ENCODE measurements at regions of chr22 and their contacts with region 1.

Region 1: GRCh38 chr22:25057013-25057881 is 104.7 kb downstream of the KIAA1671 start:
- DNase-seq: peak; percentile 28 to 37
- H3K4me3 ChIP-seq: no peak overlapping the region
- H3K27ac ChIP-seq: no peak overlapping the region
- H3K4me1 ChIP-seq: no peaks in the 10 kb centered on the region
- H3K27me3 ChIP-seq: no peaks in the 10 kb centered on the region
- CTCF ChIP-seq: peak; percentile 64 to 83 (median 70)
- POLR2A ChIP-seq: no peak

Region 2: GRCh38 chr22:24845041-24845898 is 212.0 kb before region 1 on chr22:
- intact Hi-C with region 1: no loop called
- DNase-seq: no peak
- H3K4me3 ChIP-seq: no peak overlapping the region
- H3K27ac ChIP-seq: no peak overlapping the region
- H3K4me1 ChIP-seq: no peaks in the 10 kb centered on the region
- H3K27me3 ChIP-seq: no peaks in the 10 kb centered on the region
- CTCF ChIP-seq: no peak
- POLR2A ChIP-seq: no peak

Region 3: GRCh38 chr22:24948356-24949202 is 108.7 kb before region 1 on chr22:
- intact Hi-C with region 1: loop called (anchors 10 kb)
- DNase-seq: no peak
- H3K4me3 ChIP-seq: no peak overlapping the region
- H3K27ac ChIP-seq: no peak overlapping the region
- H3K4me1 ChIP-seq: no peaks in the 10 kb centered on the region
- H3K27me3 ChIP-seq: no peaks in the 10 kb centered on the region
- CTCF ChIP-seq: no peak
- POLR2A ChIP-seq: no peak

Region 4: DNA sequence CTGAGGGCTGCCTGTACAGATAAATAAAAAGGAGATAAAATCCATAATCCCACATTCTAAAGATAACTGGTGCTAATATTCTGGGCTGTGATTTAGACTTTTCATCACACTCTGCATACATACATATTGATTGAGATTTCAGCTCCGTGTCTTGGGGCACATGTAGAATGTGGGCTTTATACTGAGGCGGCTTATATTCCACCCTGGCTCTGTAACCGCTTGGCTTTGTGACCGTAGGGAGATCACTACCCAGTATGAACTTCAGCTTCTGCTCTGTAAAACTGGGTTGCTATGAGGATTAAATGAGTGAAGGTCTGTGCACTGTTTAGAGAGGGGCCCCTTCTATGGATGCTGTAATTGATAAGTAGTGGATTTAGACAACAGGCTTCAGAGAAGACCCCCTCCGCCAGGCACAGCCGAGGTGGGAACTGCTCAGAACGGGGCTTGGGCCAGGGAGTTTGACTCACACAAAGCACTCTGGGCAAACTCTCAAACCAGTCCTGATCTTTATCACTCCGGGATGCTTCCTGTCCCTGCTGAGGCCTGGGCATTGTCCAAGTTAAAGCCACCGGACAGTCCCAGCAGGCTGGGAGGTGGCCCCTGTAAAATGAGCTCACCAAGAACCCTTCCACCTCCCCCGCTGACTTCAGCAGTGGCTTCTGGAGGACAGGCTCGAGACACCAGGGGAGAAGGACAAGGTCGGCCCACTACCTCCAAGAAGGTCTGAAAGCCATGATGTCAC is 87.5 kb before region 1 on chr22:
- intact Hi-C with region 1: no loop called
- DNase-seq: peak in 1 of 2 donors; percentile 60
- H3K4me3 ChIP-seq: no peak overlapping the region
- H3K27ac ChIP-seq: peak overlapping the region; percentile 40 to 61
- H3K4me1 ChIP-seq: no peaks in the 10 kb centered on the region
- H3K27me3 ChIP-seq: no peaks in the 10 kb centered on the region
- CTCF ChIP-seq: no peak
- POLR2A ChIP-seq: no peak

Region 5: DNA sequence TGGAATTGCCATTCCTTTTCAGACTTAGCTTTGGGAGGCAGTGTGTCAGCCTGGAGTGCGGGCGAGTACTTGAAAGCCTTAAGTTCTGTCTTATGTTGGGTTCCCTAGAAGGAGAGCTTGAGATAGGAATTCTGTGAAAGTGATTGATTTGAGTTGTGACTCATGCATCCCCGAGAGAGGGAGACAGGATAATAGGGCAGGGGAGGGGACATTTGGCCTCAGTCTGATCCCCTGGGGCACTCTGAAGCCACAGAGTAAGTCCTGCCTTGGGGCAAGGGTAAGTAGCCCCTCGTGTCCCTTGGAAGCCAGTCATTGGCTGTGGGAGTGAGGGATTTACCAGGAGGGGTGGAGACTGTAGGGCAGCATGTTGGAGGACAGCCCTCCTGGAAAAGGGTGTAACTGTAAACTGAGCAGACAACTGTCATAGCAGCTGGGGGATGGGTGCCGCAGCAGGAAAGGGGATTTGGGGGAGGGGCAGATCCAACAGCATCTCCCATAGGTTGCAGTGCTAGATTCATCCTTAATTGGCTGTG is 60.8 kb before region 1 on chr22:
- intact Hi-C with region 1: no loop called
- DNase-seq: no peak
- H3K4me3 ChIP-seq: no peak overlapping the region
- H3K27ac ChIP-seq: peak overlapping the region in 1 of 2 donors; percentile 21
- H3K4me1 ChIP-seq: no peaks in the 10 kb centered on the region
- H3K27me3 ChIP-seq: no peaks in the 10 kb centered on the region
- CTCF ChIP-seq: no peak
- POLR2A ChIP-seq: no peak

Region 6: DNA sequence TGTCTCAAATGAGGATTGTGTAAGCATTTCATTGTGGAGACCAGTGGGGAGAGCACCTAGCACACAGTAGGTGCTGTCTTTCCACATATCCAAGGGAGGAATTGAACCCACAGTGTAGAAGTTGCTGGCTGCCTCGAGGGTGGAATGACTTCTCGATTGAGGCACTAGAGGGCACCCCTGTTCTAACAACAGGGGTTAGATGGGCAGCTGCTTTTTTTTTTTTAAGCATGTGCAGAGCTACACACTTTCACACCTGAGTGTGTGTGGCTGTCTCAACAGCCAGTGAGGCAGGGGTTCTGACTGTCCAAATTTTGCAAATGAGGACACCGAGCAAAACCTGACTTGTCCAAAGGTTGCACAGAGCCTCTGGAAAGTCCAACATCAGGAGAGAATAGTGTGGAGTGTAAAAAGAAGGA is 24.2 kb after region 1 on chr22:
- intact Hi-C with region 1: no loop called
- DNase-seq: no peak
- H3K4me3 ChIP-seq: no peak overlapping the region
- H3K27ac ChIP-seq: no peak overlapping the region
- H3K4me1 ChIP-seq: no peaks in the 10 kb centered on the region
- H3K27me3 ChIP-seq: no peaks in the 10 kb centered on the region
- CTCF ChIP-seq: peak in 2 of 4 experiments; percentile 8 to 16
- POLR2A ChIP-seq: no peak

Measured in uterus (tissue), 4 donors.